ENCODE measurements at regions of chr1 and their contacts with region 1.

Region 1: GRCh38 chr1:234610348-234611152 is 572 bp upstream of the IRF2BP2 start:
- DNase-seq: peak; percentile 95 to 97
- H3K4me3 ChIP-seq: peak overlapping the region; percentile 82
- H3K4me3 Mint-ChIP-seq: peak overlapping the region; percentile 92
- H3K27ac Mint-ChIP-seq: peak overlapping the region; percentile 98
- H3K4me1 ChIP-seq: peaks cover 23% of the 10 kb centered on the region
- H3K4me1 Mint-ChIP-seq: peaks cover 40% of the 10 kb centered on the region
- H3K27me3 ChIP-seq: no peaks in the 10 kb centered on the region
- H3K27me3 Mint-ChIP-seq: no peaks in the 10 kb centered on the region
- CTCF ChIP-seq: peak in 1 of 2 experiments; percentile 3

Region 2: DNA sequence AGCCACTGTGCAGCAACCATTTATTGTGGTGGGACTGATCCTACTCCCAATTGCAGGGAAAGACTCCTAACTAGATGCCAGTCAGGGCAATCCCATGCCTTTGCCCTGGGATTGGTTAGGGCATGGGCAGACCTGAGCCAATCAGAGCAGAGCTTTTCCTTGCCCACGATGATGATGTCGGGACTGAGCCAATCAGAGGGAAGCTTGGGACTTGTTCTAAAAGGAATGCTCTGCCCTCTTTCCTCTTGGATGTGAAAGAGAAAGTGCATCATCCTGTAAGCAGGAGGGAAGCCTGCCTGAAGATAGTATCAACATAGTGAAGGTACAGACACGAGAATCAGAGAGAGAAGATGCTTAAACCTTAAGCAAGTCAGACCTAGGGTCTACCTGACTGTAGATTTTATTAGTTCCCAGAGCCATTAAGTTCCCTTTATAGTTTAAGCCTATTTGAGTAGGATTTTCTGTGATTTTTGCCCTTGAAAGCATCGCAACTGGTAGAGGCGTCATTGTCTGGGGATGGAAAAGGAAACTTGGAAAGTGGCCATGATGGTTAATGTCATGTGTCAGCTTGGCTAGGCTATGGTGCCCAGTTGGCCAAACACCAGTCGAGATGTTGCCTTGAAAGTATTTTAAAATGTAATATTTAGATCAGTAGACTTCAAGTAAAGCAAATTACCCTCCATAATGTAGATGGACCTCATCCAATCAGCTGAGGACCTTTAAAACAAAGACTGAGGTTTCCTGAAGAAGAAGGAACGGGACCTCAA is 20.5 kb before region 1 on chr1:
- CTCF ChIA-PET with region 1: no interaction called
- POLR2A ChIA-PET with region 1: no interaction called
- intact Hi-C with region 1: no loop called
- DNase-seq: no peak
- H3K4me3 ChIP-seq: no peak overlapping the region
- H3K4me3 Mint-ChIP-seq: no peak overlapping the region
- H3K27ac Mint-ChIP-seq: no peak overlapping the region
- H3K4me1 ChIP-seq: no peaks in the 10 kb centered on the region
- H3K4me1 Mint-ChIP-seq: no peaks in the 10 kb centered on the region
- H3K27me3 ChIP-seq: no peaks in the 10 kb centered on the region
- H3K27me3 Mint-ChIP-seq: no peaks in the 10 kb centered on the region
- CTCF ChIP-seq: no peak

Region 3: DNA sequence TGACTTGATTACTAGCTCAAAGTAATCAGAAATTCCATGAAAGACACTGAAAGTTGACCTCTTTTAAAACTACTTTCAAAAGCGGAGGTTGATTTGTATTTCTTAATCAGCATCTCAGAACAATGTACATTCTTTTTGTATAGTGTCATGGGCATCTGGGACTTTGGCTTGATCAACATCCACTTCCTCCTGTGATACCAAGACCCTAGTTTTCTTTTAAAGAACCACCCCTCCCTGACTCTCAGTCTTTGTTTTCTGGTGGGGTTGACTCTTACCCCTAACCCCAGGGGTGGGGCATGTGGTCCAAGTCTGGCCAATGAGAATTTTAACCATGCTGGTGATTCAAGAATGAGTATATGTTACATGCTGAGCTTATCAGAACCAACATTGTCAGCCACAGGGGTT is 21.2 kb after region 1 on chr1:
- CTCF ChIA-PET with region 1: interaction called, 4 read pairs
- POLR2A ChIA-PET with region 1: interaction called, 51 read pairs
- intact Hi-C with region 1: loop called (anchors 1 kb)
- DNase-seq: peak; percentile 69 to 70
- H3K4me3 ChIP-seq: no peak overlapping the region
- H3K4me3 Mint-ChIP-seq: no peak overlapping the region
- H3K27ac Mint-ChIP-seq: peak overlapping the region; percentile 76
- H3K4me1 ChIP-seq: peaks cover 50% of the 10 kb centered on the region
- H3K4me1 Mint-ChIP-seq: peaks cover 47% of the 10 kb centered on the region
- H3K27me3 ChIP-seq: no peaks in the 10 kb centered on the region
- H3K27me3 Mint-ChIP-seq: no peaks in the 10 kb centered on the region
- CTCF ChIP-seq: no peak

Region 4: GRCh38 chr1:234698686-234699085 is 88.1 kb after region 1 on chr1:
- CTCF ChIA-PET with region 1: no interaction called
- POLR2A ChIA-PET with region 1: no interaction called
- intact Hi-C with region 1: no loop called
- DNase-seq: no peak
- H3K4me3 ChIP-seq: no peak overlapping the region
- H3K4me3 Mint-ChIP-seq: no peak overlapping the region
- H3K27ac Mint-ChIP-seq: no peak overlapping the region
- H3K4me1 ChIP-seq: peaks cover 12% of the 10 kb centered on the region
- H3K4me1 Mint-ChIP-seq: peaks cover 9% of the 10 kb centered on the region
- H3K27me3 ChIP-seq: no peaks in the 10 kb centered on the region
- H3K27me3 Mint-ChIP-seq: no peaks in the 10 kb centered on the region
- CTCF ChIP-seq: no peak

Region 5: DNA sequence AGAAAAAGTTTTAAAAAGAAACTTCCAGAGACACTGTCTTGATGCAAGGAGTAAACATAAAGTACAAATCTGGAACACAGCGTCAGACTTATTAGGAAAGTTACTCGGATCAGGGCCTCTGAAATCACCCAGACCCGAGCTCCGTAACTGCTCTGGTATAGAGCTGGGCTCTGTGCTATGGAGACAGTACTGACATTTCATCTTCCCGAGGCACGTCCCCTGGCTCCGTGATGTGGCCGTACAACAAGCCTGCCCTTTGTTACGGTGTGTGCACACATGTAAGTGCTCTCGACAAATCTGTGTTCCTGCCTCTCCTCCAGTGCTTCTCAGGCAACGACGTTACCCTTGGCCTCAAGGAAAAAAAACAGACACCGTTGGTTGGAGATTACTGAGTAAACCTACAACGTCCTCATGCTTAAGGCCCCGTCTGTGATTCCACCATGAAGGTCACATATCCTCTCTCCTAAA is 106.4 kb after region 1 on chr1:
- CTCF ChIA-PET with region 1: interaction called, 26 read pairs
- POLR2A ChIA-PET with region 1: interaction called, 72 read pairs
- intact Hi-C with region 1: loop called (anchors 1 kb)
- DNase-seq: peak in 1 of 2 experiments; percentile 49
- H3K4me3 ChIP-seq: no peak overlapping the region
- H3K4me3 Mint-ChIP-seq: peak overlapping the region; percentile 52
- H3K27ac Mint-ChIP-seq: peak overlapping the region; percentile 86
- H3K4me1 ChIP-seq: peaks cover 90% of the 10 kb centered on the region
- H3K4me1 Mint-ChIP-seq: peaks cover 80% of the 10 kb centered on the region
- H3K27me3 ChIP-seq: no peaks in the 10 kb centered on the region
- H3K27me3 Mint-ChIP-seq: no peaks in the 10 kb centered on the region
- CTCF ChIP-seq: no peak

Region 6: GRCh38 chr1:234778221-234779159 is 167.9 kb after region 1 on chr1:
- CTCF ChIA-PET with region 1: no interaction called
- POLR2A ChIA-PET with region 1: interaction called, 12 read pairs
- intact Hi-C with region 1: loop called (anchors 5 kb)
- DNase-seq: peak in 1 of 2 experiments; percentile 52
- H3K4me3 ChIP-seq: no peak overlapping the region
- H3K4me3 Mint-ChIP-seq: no peak overlapping the region
- H3K27ac Mint-ChIP-seq: no peak overlapping the region
- H3K4me1 ChIP-seq: peaks cover 15% of the 10 kb centered on the region
- H3K4me1 Mint-ChIP-seq: no peaks in the 10 kb centered on the region
- H3K27me3 ChIP-seq: no peaks in the 10 kb centered on the region
- H3K27me3 Mint-ChIP-seq: no peaks in the 10 kb centered on the region
- CTCF ChIP-seq: no peak

Region 7: GRCh38 chr1:234963180-234963903 is 352.8 kb after region 1 on chr1:
- CTCF ChIA-PET with region 1: no interaction called
- POLR2A ChIA-PET with region 1: interaction called, 24 read pairs
- intact Hi-C with region 1: loop called (anchors 1 kb)
- DNase-seq: peak; percentile 85 to 88
- H3K4me3 ChIP-seq: peak overlapping the region; percentile 6; the same call in 1 of the 2 replicates
- H3K4me3 Mint-ChIP-seq: peak overlapping the region; percentile 78
- H3K27ac Mint-ChIP-seq: peak overlapping the region; percentile 89
- H3K4me1 ChIP-seq: peaks cover 66% of the 10 kb centered on the region
- H3K4me1 Mint-ChIP-seq: peaks cover 76% of the 10 kb centered on the region
- H3K27me3 ChIP-seq: no peaks in the 10 kb centered on the region
- H3K27me3 Mint-ChIP-seq: no peaks in the 10 kb centered on the region
- CTCF ChIP-seq: no peak

Region 8: DNA sequence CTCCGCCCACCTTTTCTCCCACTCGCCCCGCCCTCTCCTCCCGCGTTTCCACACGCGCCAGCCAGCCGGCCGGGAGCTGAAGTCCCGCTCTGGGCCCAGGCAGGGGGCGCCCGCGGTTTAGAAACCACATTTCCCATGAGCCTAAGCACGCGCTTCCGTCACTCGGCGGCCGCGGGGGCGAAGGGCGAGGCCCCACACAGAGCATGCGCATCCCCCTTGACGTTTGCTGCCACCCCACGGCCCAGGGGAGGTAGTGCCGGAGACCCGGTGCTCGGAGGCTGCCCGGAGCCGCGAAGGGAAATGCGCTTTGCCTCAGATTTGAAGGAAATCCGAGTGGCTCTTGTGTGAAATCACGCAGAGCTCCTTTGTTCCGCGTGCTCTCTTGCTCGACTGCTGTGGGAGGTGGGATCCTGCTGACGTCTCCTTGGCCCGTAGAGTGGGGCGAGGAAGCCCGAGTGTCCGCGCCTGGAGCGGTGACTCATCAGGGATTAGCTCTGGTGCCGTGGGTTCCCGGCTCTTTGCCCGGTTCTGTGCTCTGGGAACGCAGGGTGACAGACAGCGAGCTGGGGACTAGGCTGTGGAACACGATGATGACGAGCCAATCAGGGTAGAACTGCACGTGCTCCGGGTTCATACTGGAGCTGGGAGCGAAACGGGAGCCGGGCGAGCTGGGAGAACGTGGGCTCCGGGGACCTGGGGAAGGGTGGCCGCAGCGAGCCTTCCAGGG is 894.1 kb after region 1 on chr1:
- CTCF ChIA-PET with region 1: interaction called, 3 read pairs
- POLR2A ChIA-PET with region 1: interaction called, 4 read pairs
- intact Hi-C with region 1: loop called (anchors 10 kb)
- DNase-seq: peak; percentile 98 to 99
- H3K4me3 ChIP-seq: peak overlapping the region; percentile 99
- H3K4me3 Mint-ChIP-seq: peak overlapping the region; percentile 100
- H3K27ac Mint-ChIP-seq: peak overlapping the region; percentile 100
- H3K4me1 ChIP-seq: peaks cover 17% of the 10 kb centered on the region
- H3K4me1 Mint-ChIP-seq: peaks cover 9% of the 10 kb centered on the region
- H3K27me3 ChIP-seq: no peaks in the 10 kb centered on the region
- H3K27me3 Mint-ChIP-seq: peaks cover 2% of the 10 kb centered on the region
- CTCF ChIP-seq: peak; percentile 87 to 94

Measured in Caco-2 (cell line).